AG04449 (cell line): ENCODE measurements at regions of chr2 and their contacts with region 1.

Region 1: GRCh38 chr2:226215902-226216503 is 583.6 kb downstream of the IRS1 start:
- DNase-seq: no peak
- H3K4me3 ChIP-seq: no peak overlapping the region
- CTCF ChIP-seq: peak; percentile 76

Region 2: DNA sequence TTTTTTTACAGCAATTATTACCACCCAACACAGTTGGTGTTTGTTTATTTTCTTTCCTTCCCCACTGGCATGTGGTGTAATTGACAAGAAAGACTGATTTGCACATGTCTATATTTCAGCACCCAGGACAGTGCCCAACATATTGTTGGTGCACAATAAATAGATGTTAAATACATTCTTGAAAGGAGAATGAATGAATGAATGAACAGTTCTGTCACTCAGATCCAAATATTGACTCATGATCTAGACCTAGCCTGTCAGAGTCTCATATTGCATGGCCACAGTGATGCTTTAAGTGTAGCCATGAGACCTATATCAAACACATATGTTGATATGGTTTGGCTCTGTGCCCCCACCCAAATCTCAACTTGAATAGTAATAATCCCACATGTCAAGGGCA is 278.3 kb before region 1 on chr2:
- CTCF ChIA-PET with region 1: no interaction called
- POLR2A ChIA-PET with region 1: no interaction called
- DNase-seq: no peak
- H3K4me3 ChIP-seq: no peak overlapping the region
- CTCF ChIP-seq: no peak

Region 3: DNA sequence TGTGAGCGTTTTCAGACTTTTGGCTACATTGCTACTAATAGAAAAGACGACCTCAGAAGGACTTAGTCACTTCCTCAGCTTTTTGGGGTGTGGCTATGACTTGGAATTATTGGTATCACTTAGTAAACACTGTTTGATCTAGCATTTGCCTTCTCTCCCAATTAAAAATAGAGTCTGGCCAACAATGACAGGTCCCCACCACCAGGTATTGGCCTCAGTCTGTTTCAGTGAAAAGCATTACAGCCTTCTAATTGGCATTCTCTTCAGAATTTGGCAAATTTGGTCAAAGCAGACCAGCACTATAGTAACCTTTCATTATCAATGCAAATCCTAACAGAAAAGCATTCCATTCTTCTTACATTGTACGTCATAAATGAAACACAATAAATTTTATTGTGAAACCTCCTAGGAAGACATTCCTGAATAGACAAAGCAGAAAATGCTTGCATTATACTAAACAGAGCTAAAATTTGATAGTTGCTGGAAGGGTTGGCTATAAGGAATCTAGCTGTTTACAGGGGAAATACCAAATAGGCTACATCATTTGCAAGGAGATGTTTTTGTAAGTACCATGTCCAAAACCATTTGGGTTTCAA is 30.3 kb before region 1 on chr2:
- CTCF ChIA-PET with region 1: interaction called, 15 read pairs
- POLR2A ChIA-PET with region 1: no interaction called
- DNase-seq: peak; percentile 96
- H3K4me3 ChIP-seq: no peak overlapping the region; the same call in 1 of the 2 replicates
- CTCF ChIP-seq: no peak

Region 4: DNA sequence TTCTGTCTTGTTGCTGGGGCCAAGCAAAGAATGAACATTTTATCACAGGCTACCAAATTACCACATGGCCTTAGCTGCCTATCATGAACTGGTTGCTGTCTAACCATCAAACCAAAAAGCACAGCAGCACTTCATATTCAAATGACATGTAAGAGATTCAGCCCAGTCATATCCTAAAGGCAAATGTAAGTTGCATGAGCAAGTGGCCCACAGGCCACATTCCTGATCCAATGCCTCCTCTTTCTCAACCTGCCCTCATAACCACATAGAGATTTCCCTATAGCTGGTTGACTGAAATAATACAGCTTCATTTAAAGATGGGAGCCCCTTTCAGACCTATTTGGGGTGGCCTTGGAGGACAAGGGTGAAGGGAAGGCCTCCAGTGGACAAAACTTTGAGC is 11.4 kb after region 1 on chr2:
- CTCF ChIA-PET with region 1: interaction called, 14 read pairs
- POLR2A ChIA-PET with region 1: no interaction called
- DNase-seq: no peak
- H3K4me3 ChIP-seq: no peak overlapping the region
- CTCF ChIP-seq: no peak

Region 5: GRCh38 chr2:226325526-226325925 is 109.5 kb after region 1 on chr2:
- CTCF ChIA-PET with region 1: no interaction called
- POLR2A ChIA-PET with region 1: no interaction called
- DNase-seq: no peak
- H3K4me3 ChIP-seq: no peak overlapping the region
- CTCF ChIP-seq: no peak